ENCODE measurements at regions of chr7 and their contacts with region 1.

Region 1: GRCh38 chr7:127264219-127264618 is 11.5 kb upstream of the GRM8 start:
- DNase-seq: no peak
- H3K4me3 ChIP-seq: no peak overlapping the region
- H3K27ac ChIP-seq: no peak overlapping the region
- H3K4me1 ChIP-seq: no peaks in the 10 kb centered on the region
- H3K27me3 ChIP-seq: peaks cover 63% of the 10 kb centered on the region
- CTCF ChIP-seq: no peak

Region 2: GRCh38 chr7:126948664-126949063 is 315.6 kb before region 1 on chr7:
- CTCF ChIA-PET with region 1: no interaction called
- POLR2A ChIA-PET with region 1: no interaction called
- intact Hi-C with region 1: no loop called
- DNase-seq: no peak
- H3K4me3 ChIP-seq: no peak overlapping the region
- H3K27ac ChIP-seq: no peak overlapping the region
- H3K4me1 ChIP-seq: no peaks in the 10 kb centered on the region
- H3K27me3 ChIP-seq: no peaks in the 10 kb centered on the region
- CTCF ChIP-seq: no peak

Region 3: GRCh38 chr7:127514499-127514898 is 250.3 kb after region 1 on chr7:
- CTCF ChIA-PET with region 1: no interaction called
- POLR2A ChIA-PET with region 1: no interaction called
- intact Hi-C with region 1: loop called (anchors 10 kb)
- DNase-seq: peak in 1 of 2 experiments; percentile 37
- H3K4me3 ChIP-seq: no peak overlapping the region
- H3K27ac ChIP-seq: no peak overlapping the region
- H3K4me1 ChIP-seq: no peaks in the 10 kb centered on the region
- H3K27me3 ChIP-seq: peaks cover 19% of the 10 kb centered on the region
- CTCF ChIP-seq: peak; percentile 42; the same call in 1 of the 2 replicates

Measured in PC-9 (cell line).